ENCODE measurements at regions of chr17 and their contacts with region 1.

Region 1: DNA sequence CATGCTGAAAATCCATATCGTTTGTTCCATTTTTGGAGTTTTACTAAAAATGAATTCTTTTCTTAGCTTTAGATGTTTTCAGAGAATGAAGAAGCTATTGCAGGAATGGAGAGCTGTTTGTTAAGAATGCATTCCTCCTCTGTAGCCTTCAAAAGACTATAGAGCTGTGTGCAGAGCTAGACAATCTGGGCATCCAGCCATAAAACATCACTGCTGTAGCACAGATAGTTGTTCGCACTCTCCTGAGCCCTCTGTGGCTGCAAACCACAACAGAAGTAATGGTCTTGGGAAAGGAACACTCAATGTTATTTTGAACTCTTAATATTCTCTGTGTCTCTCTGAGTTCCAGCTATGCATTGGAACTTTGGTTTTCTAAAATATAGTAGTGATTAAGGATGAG is 4.9 kb downstream of the TNRC6C start:
- DNase-seq: peak; percentile 44
- H3K4me3 ChIP-seq: no peak overlapping the region
- H3K27ac ChIP-seq: no peak overlapping the region
- H3K4me1 ChIP-seq: no peaks in the 10 kb centered on the region
- H3K27me3 ChIP-seq: no peaks in the 10 kb centered on the region
- CTCF ChIP-seq: no peak
- POLR2A ChIP-seq: no peak

Region 2: DNA sequence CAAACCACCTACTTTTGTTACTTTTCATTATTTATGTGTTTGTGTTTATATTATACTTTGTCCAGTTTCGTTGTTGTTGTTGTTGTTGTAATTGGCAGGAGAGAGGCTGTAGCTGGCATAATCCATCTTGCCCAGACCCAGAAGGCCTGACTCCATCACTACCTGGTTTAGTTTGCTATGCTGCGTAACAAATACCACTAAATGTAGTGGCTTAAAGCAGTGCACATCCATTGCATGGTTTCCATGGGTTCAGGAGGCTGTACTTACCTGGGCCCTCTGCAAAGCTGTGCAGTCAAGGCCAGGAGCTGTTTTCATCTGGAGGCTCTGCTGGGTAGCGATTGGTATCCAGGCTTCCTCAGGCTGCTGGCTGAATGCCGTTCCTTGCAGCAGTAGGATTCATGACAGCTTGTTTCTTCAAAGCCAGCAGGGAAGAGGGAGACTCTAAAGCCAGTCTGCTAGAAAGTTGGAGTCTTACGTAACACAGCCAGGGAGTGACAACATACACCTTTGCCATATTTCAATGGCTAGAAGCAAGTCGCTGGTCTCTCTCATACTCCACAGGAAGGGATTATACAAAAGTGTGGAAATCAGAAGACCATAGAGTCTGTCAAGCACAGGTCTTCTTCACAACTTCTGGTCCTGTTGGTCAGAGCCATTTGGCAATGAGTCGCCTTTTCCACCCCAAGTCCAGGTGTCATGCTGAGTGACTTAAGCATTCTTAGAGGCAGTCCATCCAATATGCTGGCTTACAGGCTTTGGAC is 36.2 kb after region 1 on chr17:
- intact Hi-C with region 1: loop called (anchors 5 kb)
- DNase-seq: no peak
- H3K4me3 ChIP-seq: no peak overlapping the region
- H3K27ac ChIP-seq: no peak overlapping the region
- H3K4me1 ChIP-seq: no peaks in the 10 kb centered on the region
- H3K27me3 ChIP-seq: no peaks in the 10 kb centered on the region
- CTCF ChIP-seq: no peak
- POLR2A ChIP-seq: no peak

Region 3: GRCh38 chr17:78058001-78058400 is 94.6 kb after region 1 on chr17:
- intact Hi-C with region 1: no loop called
- DNase-seq: no peak
- H3K4me3 ChIP-seq: no peak overlapping the region
- H3K27ac ChIP-seq: no peak overlapping the region
- H3K4me1 ChIP-seq: no peaks in the 10 kb centered on the region
- H3K27me3 ChIP-seq: no peaks in the 10 kb centered on the region
- CTCF ChIP-seq: no peak
- POLR2A ChIP-seq: no peak